Lower leg skin (tissue), 4 donors: ENCODE measurements at regions of chr20 and their contacts with region 1.

Region 1: GRCh38 chr20:59782986-59783640 is 150.3 kb downstream of the SYCP2 start:
- DNase-seq: peak; percentile 32 to 89
- H3K4me3 ChIP-seq: no peak overlapping the region
- CTCF ChIP-seq: no peak
- POLR2A ChIP-seq: no peak

Region 2: DNA sequence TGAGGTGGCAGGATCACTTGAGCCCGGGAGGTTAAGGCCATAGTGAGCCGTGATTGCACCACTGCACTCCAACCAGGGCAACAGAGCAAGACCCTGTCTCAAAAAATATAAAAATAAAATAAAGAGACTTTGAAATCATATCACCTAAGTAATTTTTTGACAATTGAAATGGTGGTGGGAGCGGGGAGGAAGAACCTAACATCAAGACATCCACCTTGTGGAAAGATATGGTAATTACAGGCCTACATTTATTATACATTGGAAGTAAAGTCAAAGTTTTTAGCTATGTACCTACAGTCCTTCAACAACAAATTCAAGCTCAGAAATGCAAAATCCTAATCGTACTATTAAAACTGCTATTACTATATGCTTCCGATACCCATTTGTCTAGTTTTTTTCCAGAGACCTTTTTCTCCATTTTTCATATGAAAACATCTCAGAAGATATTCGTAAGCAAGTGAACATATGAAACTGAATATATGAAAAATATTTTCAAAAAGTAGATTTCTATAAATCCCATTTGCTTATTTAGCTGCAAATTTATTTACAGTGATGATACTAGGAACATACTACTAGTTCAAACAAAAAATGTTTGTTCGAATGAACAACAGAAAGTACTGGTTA is 67.0 kb after region 1 on chr20:
- intact Hi-C with region 1: loop called (anchors 10 kb)
- DNase-seq: no peak
- H3K4me3 ChIP-seq: no peak overlapping the region
- CTCF ChIP-seq: no peak
- POLR2A ChIP-seq: no peak